Spleen (tissue), 13 donors: ENCODE measurements at regions of chr11 and their contacts with region 1.

Region 1: DNA sequence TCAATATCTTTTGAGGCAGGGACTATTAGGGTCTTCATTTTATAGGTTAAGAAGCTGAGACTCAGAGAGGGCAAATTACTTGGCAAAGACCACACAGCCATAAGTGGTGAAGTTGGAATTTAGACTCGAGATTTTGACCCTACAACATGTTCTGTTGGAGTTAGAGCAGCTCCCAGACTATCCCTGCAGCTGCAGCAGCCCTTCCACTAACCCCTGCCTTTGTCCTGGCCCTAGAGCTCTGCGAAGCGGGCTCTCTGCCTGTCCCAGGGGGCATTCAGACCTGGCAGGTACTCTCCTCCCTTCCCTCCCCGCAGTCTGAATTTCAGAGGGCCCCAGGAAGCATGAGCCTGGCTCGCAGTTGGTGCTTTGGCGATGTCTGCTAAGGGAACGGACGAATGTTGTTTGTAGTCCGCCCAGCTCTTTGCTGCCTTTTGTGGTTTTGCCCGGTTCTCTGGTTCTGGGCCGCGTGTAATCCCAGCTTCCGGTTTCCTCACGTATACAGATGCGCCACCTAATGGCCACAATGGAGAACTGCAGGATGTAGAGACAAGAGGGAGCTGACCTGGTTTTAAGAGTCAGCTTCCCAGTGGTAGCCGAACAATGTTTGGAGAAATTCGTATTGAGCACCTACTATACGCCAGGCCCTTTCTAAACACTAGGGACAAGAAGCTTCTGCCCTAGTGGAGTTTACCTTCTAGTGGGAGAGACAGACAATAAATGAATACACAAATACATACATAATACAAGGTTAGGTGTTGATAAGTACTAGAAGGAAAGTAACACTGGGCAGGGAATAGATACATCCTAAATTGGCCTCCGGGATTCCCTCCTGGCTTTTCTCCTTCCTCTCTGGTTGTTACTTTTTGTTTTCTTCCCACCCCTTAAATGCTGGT is 125.2 kb downstream of the ST3GAL4 start:
- DNase-seq: peak; percentile 89
- H3K4me3 ChIP-seq: peak overlapping the region in 1 of 8 donors; percentile 47
- H3K27ac ChIP-seq: peak overlapping the region in 6 of 8 donors; percentile 18 to 77 (median 56)
- H3K4me1 ChIP-seq: peaks cover 2 to 44% (median 26%) of the 10 kb centered on the region in 6 donors
- H3K27me3 ChIP-seq: no peaks in the 10 kb centered on the region
- CTCF ChIP-seq: peak; percentile 93 to 98 (median 96)
- POLR2A ChIP-seq: no peak

Region 2: DNA sequence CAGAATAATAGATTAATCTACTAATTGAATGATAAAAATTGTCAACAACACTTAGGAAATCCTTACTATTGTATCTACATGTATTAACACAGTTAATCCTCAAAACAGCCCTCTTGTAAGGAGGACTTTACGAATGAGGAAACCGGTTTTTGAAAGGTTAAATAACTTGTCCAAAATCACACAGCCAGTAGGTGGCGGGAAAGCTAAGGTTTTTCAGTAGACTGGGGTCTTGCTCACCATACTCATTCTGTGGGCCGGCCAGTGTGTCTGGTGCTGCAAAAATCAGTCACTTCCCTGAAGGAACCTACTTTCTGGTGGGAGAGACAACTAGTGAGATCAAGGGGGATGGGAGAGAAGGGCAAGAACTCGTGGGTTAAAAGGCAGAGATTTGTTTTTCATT is 172.9 kb before region 1 on chr11:
- intact Hi-C with region 1: loop called (anchors 5 kb)
- DNase-seq: no peak
- H3K4me3 ChIP-seq: no peak overlapping the region
- H3K27ac ChIP-seq: peak overlapping the region in 2 of 8 donors; percentile 0 to 23
- H3K4me1 ChIP-seq: peaks cover 23 to 94% (median 65%) of the 10 kb centered on the region in 6 donors
- H3K27me3 ChIP-seq: no peaks in the 10 kb centered on the region
- CTCF ChIP-seq: peak in 4 of 11 experiments; percentile 19 to 29 (median 26)
- POLR2A ChIP-seq: no peak

Region 3: DNA sequence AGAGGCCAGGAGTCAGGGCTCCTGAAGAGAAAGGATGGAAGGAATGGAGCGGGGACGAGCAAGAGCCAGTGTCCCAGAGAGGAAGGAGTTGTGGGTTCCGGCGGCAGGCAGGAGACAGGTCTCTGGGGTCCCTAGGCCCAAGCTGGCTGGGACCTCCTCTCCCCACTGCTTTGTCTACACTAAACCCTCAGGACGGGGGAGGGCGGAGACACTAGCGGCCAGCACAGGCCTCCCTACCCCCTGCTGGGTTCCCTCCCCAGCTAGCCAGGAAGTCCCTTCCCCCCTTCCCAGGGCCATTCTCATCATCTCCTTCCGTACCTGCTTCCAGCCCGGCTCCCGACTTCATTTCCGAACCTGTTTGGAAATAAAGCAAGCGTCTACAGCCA is 45.7 kb before region 1 on chr11:
- intact Hi-C with region 1: loop called (anchors 5 kb)
- DNase-seq: no peak
- H3K4me3 ChIP-seq: no peak overlapping the region
- H3K27ac ChIP-seq: peak overlapping the region in 6 of 8 donors; percentile 42 to 84 (median 74)
- H3K4me1 ChIP-seq: peaks cover 8 to 75% (median 34%) of the 10 kb centered on the region in 6 donors
- H3K27me3 ChIP-seq: peaks cover 0 to 5% (median 0%) of the 10 kb centered on the region in 7 donors
- CTCF ChIP-seq: no peak
- POLR2A ChIP-seq: no peak

Region 4: GRCh38 chr11:126573325-126574076 is 92.8 kb after region 1 on chr11:
- intact Hi-C with region 1: no loop called
- DNase-seq: no peak
- H3K4me3 ChIP-seq: no peak overlapping the region
- H3K27ac ChIP-seq: no peak overlapping the region
- H3K4me1 ChIP-seq: no peaks in the 10 kb centered on the region
- H3K27me3 ChIP-seq: peaks cover 0 to 16% (median 0%) of the 10 kb centered on the region in 7 donors
- CTCF ChIP-seq: no peak
- POLR2A ChIP-seq: no peak